Lower leg skin (tissue), 4 donors: ENCODE measurements at regions of chr1 and their contacts with region 1.

Region 1: DNA sequence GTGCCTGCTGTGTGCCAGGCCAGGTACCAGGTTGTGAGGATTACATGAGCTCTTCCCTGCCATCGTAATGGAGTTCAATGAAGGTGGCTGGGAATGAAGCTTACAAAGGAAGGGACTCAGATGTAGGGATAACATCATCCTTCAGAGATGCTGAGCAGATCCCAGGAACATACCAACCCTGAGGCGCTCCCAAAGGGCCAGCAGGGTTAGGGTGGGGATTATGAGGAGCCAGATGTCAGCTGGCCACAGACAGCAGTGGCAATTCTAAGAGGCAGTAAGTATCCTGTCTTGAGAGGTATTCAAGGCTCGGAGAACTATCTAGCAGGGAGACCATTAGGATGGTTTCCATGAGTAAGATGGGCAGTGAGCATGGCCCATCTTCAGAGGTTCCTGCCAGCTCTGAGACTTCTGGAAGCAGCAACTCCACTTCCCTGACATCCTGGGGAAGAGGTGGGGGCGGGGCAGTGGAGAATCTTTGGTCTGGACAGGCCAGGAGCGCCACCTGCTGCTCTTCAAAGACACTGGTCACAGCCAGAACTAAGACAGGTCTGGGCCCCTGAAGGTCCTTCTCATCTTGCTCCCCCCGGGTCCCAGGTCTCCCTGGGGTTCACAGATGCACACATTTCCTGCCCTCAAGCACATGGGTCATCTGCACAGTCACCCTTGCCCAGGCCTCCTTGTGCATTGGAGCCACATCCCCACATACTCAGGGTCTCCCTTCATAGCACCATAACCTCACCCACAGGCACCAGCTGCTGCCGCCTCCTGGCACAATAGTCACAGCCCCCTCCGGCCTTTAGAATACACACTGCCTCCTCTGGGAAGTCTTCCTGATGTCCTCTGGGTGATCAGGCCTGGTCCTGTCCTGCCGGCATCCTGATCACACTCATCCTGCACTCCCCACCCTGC is 2.7 kb upstream of the SDC3 start:
- DNase-seq: peak; percentile 86 to 96
- H3K4me3 ChIP-seq: no peak overlapping the region
- CTCF ChIP-seq: peak in 1 of 3 donors; percentile 47
- POLR2A ChIP-seq: no peak

Region 2: GRCh38 chr1:30684881-30685795 is 226.2 kb before region 1 on chr1:
- intact Hi-C with region 1: no loop called
- DNase-seq: peak in 1 of 2 donors; percentile 79
- H3K4me3 ChIP-seq: no peak overlapping the region
- CTCF ChIP-seq: no peak
- POLR2A ChIP-seq: no peak

Region 3: GRCh38 chr1:30719406-30720270 is 191.7 kb before region 1 on chr1:
- intact Hi-C with region 1: loop called (anchors 5 kb)
- DNase-seq: no peak
- H3K4me3 ChIP-seq: no peak overlapping the region
- CTCF ChIP-seq: peak in 1 of 3 donors; percentile 4
- POLR2A ChIP-seq: no peak

Region 4: GRCh38 chr1:30779294-30780071 is 131.8 kb before region 1 on chr1:
- intact Hi-C with region 1: loop called (anchors 1 kb)
- DNase-seq: peak; percentile 80 to 97
- H3K4me3 ChIP-seq: no peak overlapping the region
- CTCF ChIP-seq: peak in 2 of 3 donors; percentile 34 to 92
- POLR2A ChIP-seq: no peak

Region 5: DNA sequence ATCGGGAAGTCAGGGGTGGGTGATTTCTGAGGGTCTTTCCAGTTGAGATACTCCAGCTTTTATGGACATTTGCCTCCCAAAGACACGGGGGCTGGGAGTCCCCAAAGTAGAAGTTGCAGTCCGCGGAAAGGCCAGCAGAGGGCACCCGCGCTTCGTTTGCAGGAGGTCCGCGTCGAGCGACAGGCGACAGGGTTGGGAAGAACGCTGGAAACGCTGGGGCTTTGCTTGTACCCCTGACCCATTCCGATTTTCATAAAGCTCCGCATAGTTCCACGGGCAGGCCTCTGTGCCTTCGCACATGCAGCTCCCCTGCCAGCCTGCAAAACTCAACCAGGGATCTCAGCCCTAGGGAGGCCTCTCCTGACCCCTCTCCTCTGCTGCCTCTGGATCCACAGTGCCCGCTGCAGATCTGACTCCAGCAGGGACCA is 109.5 kb before region 1 on chr1:
- intact Hi-C with region 1: loop called (anchors 2 kb)
- DNase-seq: peak; percentile 67 to 96
- H3K4me3 ChIP-seq: no peak overlapping the region
- CTCF ChIP-seq: peak in 1 of 3 donors; percentile 90
- POLR2A ChIP-seq: no peak

Region 6: DNA sequence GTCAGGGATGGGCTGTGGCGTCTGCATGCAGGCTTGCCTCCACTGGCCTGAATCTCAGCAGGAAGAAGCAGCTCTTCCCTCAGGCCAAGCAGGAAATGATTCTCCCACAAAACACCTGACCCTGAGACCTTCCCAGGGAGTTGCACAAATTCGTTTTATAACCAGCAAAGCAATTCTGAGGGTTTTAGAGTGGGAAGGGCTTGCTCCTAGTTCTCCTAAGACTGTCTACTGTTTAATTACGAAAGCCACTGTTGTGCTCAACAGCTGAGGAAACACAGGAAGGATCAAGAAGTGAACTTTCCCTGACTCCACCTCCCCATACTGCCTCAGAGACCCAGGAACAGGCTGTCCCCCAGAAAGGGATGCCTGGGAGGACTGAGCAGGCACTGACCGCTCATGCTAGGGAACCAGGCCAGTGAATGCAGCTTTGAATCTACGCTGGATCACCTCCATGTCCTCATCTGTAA is 191.2 kb after region 1 on chr1:
- intact Hi-C with region 1: no loop called
- DNase-seq: peak in 1 of 2 donors; percentile 49
- H3K4me3 ChIP-seq: no peak overlapping the region
- CTCF ChIP-seq: no peak
- POLR2A ChIP-seq: no peak